B cell (primary cell): ENCODE measurements at regions of chr16 and their contacts with region 1.

Region 1: DNA sequence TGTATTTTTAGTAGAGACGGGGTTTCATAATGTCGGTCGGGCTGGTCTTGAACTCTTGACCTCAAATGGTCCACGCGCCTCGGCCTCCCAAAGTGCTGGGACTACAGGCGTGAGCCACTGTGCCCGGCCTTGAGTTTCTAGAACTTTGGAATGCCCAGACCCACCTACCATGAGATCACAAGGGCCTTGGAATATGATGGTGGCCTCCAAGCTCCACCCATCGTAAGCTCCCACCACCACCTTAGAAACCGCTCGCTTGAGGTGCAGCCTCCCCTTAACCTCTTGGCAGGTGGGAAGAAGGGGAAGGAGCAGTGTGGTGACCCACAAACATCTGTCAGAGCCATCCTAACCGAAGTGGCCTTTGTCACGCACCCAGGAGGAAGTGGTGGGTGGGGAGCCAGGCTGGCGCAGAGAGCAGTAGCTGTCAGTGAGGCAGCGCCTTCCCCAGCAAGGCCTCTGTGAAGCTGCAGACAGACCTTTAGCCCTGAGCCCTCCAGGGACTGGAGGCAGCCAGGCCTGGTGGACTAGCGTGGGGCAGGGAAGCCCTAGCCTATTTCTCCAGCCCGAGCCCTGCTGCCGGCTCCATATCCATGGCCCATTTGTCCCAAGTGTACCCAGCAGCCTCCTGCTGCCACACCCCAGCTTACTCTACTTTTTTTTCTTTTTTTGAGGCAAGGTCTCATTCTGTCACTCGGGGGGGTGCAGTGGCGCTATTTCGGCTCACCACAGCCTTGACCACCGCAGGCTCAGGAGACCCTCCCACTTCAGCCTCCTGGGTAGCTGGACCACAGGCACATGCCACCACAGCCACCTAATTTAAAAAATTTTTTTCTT is 13.1 kb upstream of the SEPHS2 start:
- DNase-seq: peak; percentile 83
- ATAC-seq: peak; percentile 93
- H3K4me3 ChIP-seq: peak overlapping the region in 3 of 5 experiments; percentile 3 to 17 (median 9)
- H3K4me3 Mint-ChIP-seq: peak overlapping the region; percentile 80
- H3K27ac ChIP-seq: peak overlapping the region; percentile 69 to 70
- H3K27ac Mint-ChIP-seq: peak overlapping the region; percentile 97
- H3K4me1 ChIP-seq: peaks cover 13 to 37% of the 10 kb centered on the region in 2 donors
- H3K4me1 Mint-ChIP-seq: peaks cover 52% of the 10 kb centered on the region
- H3K27me3 ChIP-seq: no peaks in the 10 kb centered on the region
- H3K27me3 Mint-ChIP-seq: no peaks in the 10 kb centered on the region
- CTCF ChIP-seq: no peak

Region 2: GRCh38 chr16:30472328-30472942 is 13.7 kb after region 1 on chr16 and contains the start of gene ITGAL:
- CTCF ChIA-PET with region 1: interaction called, 14 read pairs
- POLR2A ChIA-PET with region 1: interaction called, 74 read pairs
- intact Hi-C with region 1: loop called (anchors 1 kb)
- DNase-seq: peak; percentile 83
- ATAC-seq: peak; percentile 69
- H3K4me3 ChIP-seq: peak within 1 kb of the TSS; percentile 39 to 76 (median 59)
- H3K4me3 Mint-ChIP-seq: peak within 1 kb of the TSS; percentile 83
- H3K27ac ChIP-seq: peak within 1 kb of the TSS; percentile 70 to 82
- H3K27ac Mint-ChIP-seq: peak within 1 kb of the TSS; percentile 91
- H3K4me1 ChIP-seq: peaks cover 42 to 48% of the 10 kb centered on the region in 2 donors
- H3K4me1 Mint-ChIP-seq: peaks cover 47% of the 10 kb centered on the region
- H3K27me3 ChIP-seq: no peaks in the 10 kb centered on the region
- H3K27me3 Mint-ChIP-seq: no peaks in the 10 kb centered on the region
- CTCF ChIP-seq: no peak
- total RNA-seq, gene ITGAL: 176 and 184 TPM in 2 replicates

Region 3: DNA sequence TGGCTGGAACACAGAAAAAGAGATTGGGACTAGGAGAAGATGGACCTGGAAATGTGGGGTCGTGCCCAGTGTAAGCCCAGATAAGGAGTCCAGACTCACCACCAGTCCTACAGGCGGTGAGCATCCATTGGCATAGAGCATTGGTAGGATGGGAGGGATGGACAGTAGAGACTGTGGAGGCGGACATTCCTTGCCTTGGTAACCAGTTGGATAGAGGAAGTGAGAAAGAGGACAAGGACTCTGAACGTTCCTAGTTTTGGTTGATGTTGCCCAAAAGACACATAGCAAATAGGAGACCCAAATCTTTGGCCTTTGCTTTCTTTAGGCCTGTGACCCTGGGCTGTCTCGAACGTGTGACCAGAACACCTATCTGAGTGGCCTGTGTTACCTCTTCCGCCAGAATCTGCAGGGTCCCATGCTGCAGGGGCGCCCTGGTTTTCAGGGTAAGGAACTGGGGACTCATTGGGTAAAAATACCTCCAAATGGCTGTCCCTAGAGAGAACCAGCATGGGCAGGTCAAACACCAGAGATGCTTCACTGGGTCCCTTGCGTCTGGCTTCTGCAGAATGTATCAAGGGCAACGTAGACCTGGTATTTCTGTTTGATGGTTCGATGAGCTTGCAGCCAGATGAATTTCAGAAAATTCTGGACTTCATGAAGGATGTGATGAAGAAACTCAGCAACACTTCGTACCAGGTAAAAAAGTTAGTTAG is 20.1 kb after region 1 on chr16:
- CTCF ChIA-PET with region 1: interaction called, 14 read pairs
- POLR2A ChIA-PET with region 1: interaction called, 74 read pairs
- intact Hi-C with region 1: no loop called
- DNase-seq: no peak
- ATAC-seq: peak; percentile 47
- H3K4me3 ChIP-seq: no peak overlapping the region
- H3K4me3 Mint-ChIP-seq: no peak overlapping the region
- H3K27ac ChIP-seq: peak overlapping the region in 1 of 2 donors; percentile 25
- H3K27ac Mint-ChIP-seq: peak overlapping the region; percentile 59
- H3K4me1 ChIP-seq: peaks cover 11 to 16% of the 10 kb centered on the region in 2 donors
- H3K4me1 Mint-ChIP-seq: peaks cover 35% of the 10 kb centered on the region
- H3K27me3 ChIP-seq: no peaks in the 10 kb centered on the region
- H3K27me3 Mint-ChIP-seq: no peaks in the 10 kb centered on the region
- CTCF ChIP-seq: no peak

Region 4: GRCh38 chr16:30677931-30678585 is 219.3 kb after region 1 on chr16:
- CTCF ChIA-PET with region 1: no interaction called
- POLR2A ChIA-PET with region 1: no interaction called
- intact Hi-C with region 1: no loop called
- DNase-seq: no peak
- ATAC-seq: no peak
- H3K4me3 ChIP-seq: no peak overlapping the region
- H3K4me3 Mint-ChIP-seq: no peak overlapping the region
- H3K27ac ChIP-seq: no peak overlapping the region
- H3K27ac Mint-ChIP-seq: no peak overlapping the region
- H3K4me1 ChIP-seq: no peaks in the 10 kb centered on the region
- H3K4me1 Mint-ChIP-seq: no peaks in the 10 kb centered on the region
- H3K27me3 ChIP-seq: no peaks in the 10 kb centered on the region
- H3K27me3 Mint-ChIP-seq: no peaks in the 10 kb centered on the region
- CTCF ChIP-seq: no peak